Heart left ventricle (tissue), 16 donors: ENCODE measurements at regions of chr5 and their contacts with region 1.

Region 1: GRCh38 chr5:54344653-54345052 is 34.3 kb upstream of the ARL15 start:
- DNase-seq: no peak
- ATAC-seq: peak in 2 of 4 donors; percentile 18 to 42
- H3K4me3 ChIP-seq: no peak overlapping the region
- H3K27ac ChIP-seq: no peak overlapping the region
- H3K4me1 ChIP-seq: peaks cover 0 to 5% (median 0%) of the 10 kb centered on the region in 12 donors
- H3K27me3 ChIP-seq: no peaks in the 10 kb centered on the region
- CTCF ChIP-seq: no peak
- POLR2A ChIP-seq: no peak

Region 2: DNA sequence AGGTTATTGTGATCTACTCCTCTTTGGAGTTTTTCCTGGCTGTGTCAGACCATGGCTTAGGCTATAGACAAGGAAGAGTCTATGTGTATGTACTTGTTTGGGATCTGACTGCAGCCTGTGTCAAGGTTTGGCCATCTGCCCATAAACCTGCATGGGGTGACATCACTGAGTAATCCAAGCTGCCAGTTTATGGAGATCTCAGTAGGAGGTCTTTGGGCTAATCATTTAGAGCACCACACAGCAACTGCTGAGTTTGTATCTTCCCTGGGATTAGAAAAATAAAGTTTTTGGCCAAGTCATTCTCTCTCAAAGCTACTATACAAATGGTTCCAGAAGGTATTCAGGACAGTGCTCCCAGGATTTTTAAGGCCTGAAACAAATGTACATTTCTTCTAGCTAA is 45.4 kb after region 1 on chr5:
- intact Hi-C with region 1: loop called in 1 of 10 experiments (anchors 10 kb)
- DNase-seq: peak in 2 of 5 donors; percentile 12 to 41
- ATAC-seq: peak in 1 of 4 donors; percentile 37
- H3K4me3 ChIP-seq: no peak overlapping the region
- H3K27ac ChIP-seq: peak overlapping the region in 2 of 12 donors; percentile 16 to 66
- H3K4me1 ChIP-seq: peaks cover 0 to 48% (median 14%) of the 10 kb centered on the region in 12 donors
- H3K27me3 ChIP-seq: no peaks in the 10 kb centered on the region
- CTCF ChIP-seq: no peak
- POLR2A ChIP-seq: no peak